ENCODE measurements at regions of chr9 and their contacts with region 1.

Region 1: GRCh38 chr9:6715755-6716643 is 41.8 kb upstream of the KDM4C start:
- DNase-seq: no peak
- ATAC-seq: peak; percentile 81
- H3K4me3 ChIP-seq: peak overlapping the region; percentile 43
- H3K27ac ChIP-seq: no peak overlapping the region; the same call in 1 of the 2 replicates
- H3K4me1 ChIP-seq: peaks cover 2% of the 10 kb centered on the region; the same call in 1 of the 2 replicates
- H3K27me3 ChIP-seq: peaks cover 2% of the 10 kb centered on the region; the same call in 1 of the 2 replicates
- CTCF ChIP-seq: no peak
- POLR2A ChIP-seq: no peak
- RAD21 ChIP-seq: no peak

Region 2: GRCh38 chr9:6681147-6681956 is 34.6 kb before region 1 on chr9:
- CTCF ChIA-PET with region 1: no interaction called
- POLR2A ChIA-PET with region 1: interaction called, 12 read pairs
- dilution Hi-C with region 1: no loop called
- in situ Hi-C with region 1: no loop called
- intact Hi-C with region 1: no loop called
- DNase-seq: peak; percentile 98
- ATAC-seq: peak; percentile 97
- H3K4me3 ChIP-seq: peak overlapping the region; percentile 80
- H3K27ac ChIP-seq: peak overlapping the region; percentile 96
- H3K4me1 ChIP-seq: no peaks in the 10 kb centered on the region
- H3K27me3 ChIP-seq: no peaks in the 10 kb centered on the region
- CTCF ChIP-seq: no peak
- POLR2A ChIP-seq: peak; percentile 87
- RAD21 ChIP-seq: no peak

Region 3: GRCh38 chr9:6703898-6704639 is 11.9 kb before region 1 on chr9:
- CTCF ChIA-PET with region 1: interaction called, 5 read pairs
- POLR2A ChIA-PET with region 1: no interaction called
- dilution Hi-C with region 1: no loop called
- in situ Hi-C with region 1: no loop called
- intact Hi-C with region 1: loop called (anchors 1 kb)
- DNase-seq: peak; percentile 12
- ATAC-seq: peak; percentile 83
- H3K4me3 ChIP-seq: peak overlapping the region; percentile 81
- H3K27ac ChIP-seq: no peak overlapping the region; the same call in 1 of the 2 replicates
- H3K4me1 ChIP-seq: no peaks in the 10 kb centered on the region
- H3K27me3 ChIP-seq: no peaks in the 10 kb centered on the region
- CTCF ChIP-seq: no peak
- POLR2A ChIP-seq: no peak
- RAD21 ChIP-seq: no peak